ENCODE measurements at regions of chr3 and their contacts with region 1.

Region 1: DNA sequence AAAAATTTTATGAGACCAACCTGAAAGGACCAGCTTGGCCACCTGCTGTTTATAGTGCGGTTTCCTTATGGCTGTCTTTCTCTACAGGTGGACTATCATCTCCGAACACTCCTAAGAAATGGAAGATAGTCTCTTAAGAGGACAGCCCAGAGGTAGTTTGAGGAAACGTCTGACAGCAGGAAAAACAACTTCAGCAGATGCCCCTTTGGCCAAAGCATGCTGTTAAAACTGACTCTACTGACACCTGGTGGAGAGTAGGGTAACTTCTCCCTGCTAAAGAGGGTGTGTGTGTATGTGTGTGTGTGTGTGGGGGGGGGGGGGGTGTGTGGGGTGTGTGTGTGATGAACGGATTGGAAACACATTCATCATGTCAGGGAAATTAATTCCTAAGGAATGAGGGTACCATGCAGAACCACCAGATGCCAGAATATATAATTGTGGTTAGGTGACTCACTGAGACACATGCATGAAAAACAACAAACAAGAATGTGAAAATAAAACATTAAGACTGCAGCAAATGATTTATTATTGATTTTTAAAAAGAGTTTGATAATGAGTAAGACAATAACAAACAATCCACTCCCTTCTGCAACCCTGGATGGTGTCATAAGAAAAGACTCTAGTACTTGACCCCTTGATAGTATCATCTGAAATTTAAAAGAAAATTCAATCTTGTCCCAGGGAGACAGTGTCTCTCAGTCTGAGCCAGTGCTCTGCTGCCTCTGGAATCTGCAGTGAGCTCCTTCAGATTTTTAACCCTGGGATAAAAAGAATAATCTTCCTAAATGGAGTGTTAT is 256.5 kb downstream of the THRB start:
- DNase-seq: peak; percentile 38
- ATAC-seq: peak; percentile 90
- H3K4me3 Mint-ChIP-seq: no peak overlapping the region
- H3K27ac Mint-ChIP-seq: no peak overlapping the region
- H3K4me1 Mint-ChIP-seq: peaks cover 3% of the 10 kb centered on the region
- H3K27me3 Mint-ChIP-seq: peaks cover 3% of the 10 kb centered on the region

Region 2: GRCh38 chr3:23888617-23889228 is 349.4 kb before region 1 on chr3:
- CTCF ChIA-PET with region 1: no interaction called
- POLR2A ChIA-PET with region 1: no interaction called
- intact Hi-C with region 1: loop called (anchors 1 to 2 kb)
- DNase-seq: no peak
- ATAC-seq: no peak
- H3K4me3 Mint-ChIP-seq: no peak overlapping the region
- H3K27ac Mint-ChIP-seq: no peak overlapping the region
- H3K4me1 Mint-ChIP-seq: no peaks in the 10 kb centered on the region
- H3K27me3 Mint-ChIP-seq: no peaks in the 10 kb centered on the region

Region 3: GRCh38 chr3:24088782-24089181 is 149.4 kb before region 1 on chr3:
- CTCF ChIA-PET with region 1: no interaction called
- POLR2A ChIA-PET with region 1: no interaction called
- intact Hi-C with region 1: loop called (anchors 5 kb)
- DNase-seq: no peak
- ATAC-seq: no peak
- H3K4me3 Mint-ChIP-seq: no peak overlapping the region
- H3K27ac Mint-ChIP-seq: no peak overlapping the region
- H3K4me1 Mint-ChIP-seq: no peaks in the 10 kb centered on the region
- H3K27me3 Mint-ChIP-seq: no peaks in the 10 kb centered on the region

Region 4: DNA sequence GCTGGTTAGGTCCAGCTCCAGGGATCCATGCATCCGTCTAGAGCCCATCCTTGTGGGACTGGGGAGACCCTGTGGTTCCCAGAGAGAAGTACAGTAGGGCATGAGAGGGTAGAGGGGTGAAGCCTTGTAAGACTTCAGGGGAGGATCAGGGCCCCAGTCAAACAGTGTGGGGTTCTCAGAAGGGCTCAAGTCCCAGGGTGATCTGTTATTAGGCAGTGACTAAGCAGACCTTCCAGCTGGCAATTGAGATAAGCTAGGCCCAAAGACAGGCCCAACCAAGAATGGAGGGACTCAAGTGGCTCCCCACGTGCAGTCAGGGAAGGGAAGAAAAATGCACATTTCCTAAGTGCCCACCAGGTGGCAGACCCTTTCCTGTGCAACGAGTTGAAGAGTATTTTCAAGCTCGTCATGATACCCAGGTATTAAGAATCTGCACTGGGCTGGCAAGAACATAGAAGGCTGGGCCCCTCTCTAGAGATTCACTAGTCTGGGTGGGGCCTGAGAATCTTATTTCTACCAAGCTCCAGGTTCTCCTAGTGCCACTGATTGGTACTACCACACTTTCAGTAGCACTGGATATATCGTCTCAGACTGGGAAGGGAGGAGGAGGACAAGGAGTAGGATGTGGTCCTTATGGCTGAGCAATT is 52.3 kb before region 1 on chr3:
- CTCF ChIA-PET with region 1: interaction called, 8 read pairs
- POLR2A ChIA-PET with region 1: no interaction called
- intact Hi-C with region 1: loop called in 1 of 2 experiments (anchors 1 kb)
- DNase-seq: peak; percentile 55
- ATAC-seq: peak; percentile 77
- H3K4me3 Mint-ChIP-seq: no peak overlapping the region
- H3K27ac Mint-ChIP-seq: no peak overlapping the region
- H3K4me1 Mint-ChIP-seq: no peaks in the 10 kb centered on the region
- H3K27me3 Mint-ChIP-seq: no peaks in the 10 kb centered on the region

Region 5: GRCh38 chr3:24299806-24300626 is 61.8 kb after region 1 on chr3:
- CTCF ChIA-PET with region 1: no interaction called
- POLR2A ChIA-PET with region 1: no interaction called
- intact Hi-C with region 1: no loop called
- DNase-seq: no peak
- ATAC-seq: no peak
- H3K4me3 Mint-ChIP-seq: no peak overlapping the region
- H3K27ac Mint-ChIP-seq: no peak overlapping the region
- H3K4me1 Mint-ChIP-seq: no peaks in the 10 kb centered on the region
- H3K27me3 Mint-ChIP-seq: peaks cover 6% of the 10 kb centered on the region

Measured in activated CD4-positive, alpha-beta T cell treated with anti-CD3 and anti-CD28 coated beads for 36 hours (primary cell).